HAP-1 (cell line): ENCODE measurements at regions of chr5 and their contacts with region 1.

Region 1: GRCh38 chr5:154654486-154655371 is 100.4 kb upstream of the LARP1 start:
- DNase-seq: no peak
- H3K4me3 ChIP-seq: no peak overlapping the region
- H3K4me1 ChIP-seq: peaks cover 8% of the 10 kb centered on the region
- H3K27me3 ChIP-seq: no peaks in the 10 kb centered on the region

Region 2: DNA sequence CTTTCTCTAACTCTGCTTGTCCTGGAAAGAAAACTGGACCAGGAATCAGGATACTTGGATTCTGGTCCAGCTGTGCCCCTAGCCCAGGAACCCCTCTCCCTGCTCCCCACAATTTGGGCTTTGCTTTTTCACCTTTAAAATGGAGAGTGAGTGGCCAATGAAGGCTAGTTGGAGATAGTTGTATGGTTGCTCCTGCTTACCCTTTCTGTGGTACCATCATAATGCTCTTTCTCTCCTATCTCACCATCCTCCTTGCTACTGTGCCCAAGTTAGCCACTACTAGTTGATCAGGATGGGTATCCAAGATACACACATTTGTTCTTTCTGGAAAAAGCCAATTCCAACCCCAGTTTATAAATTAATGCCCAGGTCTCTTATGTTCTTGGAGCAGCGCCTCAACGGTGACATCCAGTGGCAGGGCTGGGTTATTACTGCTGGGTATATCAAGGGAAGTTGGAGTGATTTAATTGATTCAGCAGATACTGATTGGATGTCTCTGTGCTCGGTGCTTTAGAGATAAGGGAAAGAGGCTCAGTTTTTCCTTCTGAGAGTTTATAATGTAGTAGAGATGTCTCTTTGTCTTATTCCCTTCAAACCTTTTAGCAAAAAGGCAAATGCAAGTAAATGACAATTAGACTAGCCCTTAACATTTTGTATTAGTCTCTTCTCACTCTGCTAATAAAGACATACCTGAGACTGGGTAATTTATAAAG is 157.1 kb after region 1 on chr5:
- in situ Hi-C with region 1: loop called (anchors 5 kb)
- DNase-seq: peak; percentile 36 to 73
- H3K4me3 ChIP-seq: no peak overlapping the region
- H3K4me1 ChIP-seq: no peaks in the 10 kb centered on the region
- H3K27me3 ChIP-seq: no peaks in the 10 kb centered on the region

Region 3: GRCh38 chr5:154972476-154973080 is 317.8 kb after region 1 on chr5:
- in situ Hi-C with region 1: no loop called
- DNase-seq: peak; percentile 31 to 58
- H3K4me3 ChIP-seq: no peak overlapping the region
- H3K4me1 ChIP-seq: no peaks in the 10 kb centered on the region
- H3K27me3 ChIP-seq: no peaks in the 10 kb centered on the region